Naive thymus-derived CD4-positive, alpha-beta T cell (primary cell): ENCODE measurements at regions of chr6 and their contacts with region 1.

Region 1: GRCh38 chr6:157879873-157880254 is 56.8 kb downstream of the SNX9 start:
- DNase-seq: no peak
- ATAC-seq: no peak
- H3K4me3 ChIP-seq: no peak overlapping the region
- H3K4me3 Mint-ChIP-seq: peak overlapping the region in 5 of 10 donors; percentile 4 to 68 (median 19)
- H3K27ac ChIP-seq: no peak overlapping the region
- H3K27ac Mint-ChIP-seq: peak overlapping the region in 8 of 9 donors; percentile 2 to 99 (median 70)
- H3K4me1 ChIP-seq: peaks cover 0 to 46% of the 10 kb centered on the region in 2 donors
- H3K4me1 Mint-ChIP-seq: peaks cover 16 to 88% (median 84%) of the 10 kb centered on the region in 7 donors
- H3K27me3 ChIP-seq: no peaks in the 10 kb centered on the region
- H3K27me3 Mint-ChIP-seq: no peaks in the 10 kb centered on the region

Region 2: GRCh38 chr6:157017861-157018260 is 862.0 kb before region 1 on chr6:
- CTCF ChIA-PET with region 1: no interaction called
- POLR2A ChIA-PET with region 1: no interaction called
- intact Hi-C with region 1: no loop called
- DNase-seq: no peak
- ATAC-seq: no peak
- H3K4me3 ChIP-seq: no peak overlapping the region
- H3K4me3 Mint-ChIP-seq: no peak overlapping the region
- H3K27ac ChIP-seq: peak overlapping the region; percentile 26
- H3K27ac Mint-ChIP-seq: peak overlapping the region in 6 of 9 donors; percentile 22 to 98 (median 86)
- H3K4me1 ChIP-seq: peaks cover 5 to 21% of the 10 kb centered on the region in 2 donors
- H3K4me1 Mint-ChIP-seq: peaks cover 26 to 82% (median 66%) of the 10 kb centered on the region in 7 donors
- H3K27me3 ChIP-seq: no peaks in the 10 kb centered on the region
- H3K27me3 Mint-ChIP-seq: no peaks in the 10 kb centered on the region

Region 3: DNA sequence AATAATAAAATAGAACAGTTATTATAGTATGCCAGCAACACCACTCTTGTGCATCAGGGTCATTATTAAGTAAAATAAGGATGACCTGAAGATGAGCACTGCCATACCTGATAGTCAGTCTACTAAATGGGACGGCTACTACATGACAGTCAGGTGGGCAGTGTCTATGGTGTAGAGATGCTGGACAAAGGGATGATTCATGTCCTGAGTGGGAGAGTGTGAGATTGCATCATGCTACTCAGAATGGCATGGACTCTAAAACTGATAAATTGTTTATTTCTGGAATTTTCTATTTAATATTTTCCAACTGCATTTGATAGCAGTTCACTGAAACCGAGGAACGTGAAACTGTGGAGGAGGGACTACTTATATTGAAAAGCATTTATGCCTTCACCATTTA is 18.1 kb before region 1 on chr6:
- CTCF ChIA-PET with region 1: no interaction called
- POLR2A ChIA-PET with region 1: interaction called, 4 read pairs
- intact Hi-C with region 1: loop called in 1 of 2 experiments (anchors 2 kb)
- DNase-seq: no peak
- ATAC-seq: no peak
- H3K4me3 ChIP-seq: no peak overlapping the region
- H3K4me3 Mint-ChIP-seq: no peak overlapping the region
- H3K27ac ChIP-seq: no peak overlapping the region
- H3K27ac Mint-ChIP-seq: peak overlapping the region in 6 of 9 donors; percentile 17 to 75 (median 59)
- H3K4me1 ChIP-seq: peaks cover 8 to 37% of the 10 kb centered on the region in 2 donors
- H3K4me1 Mint-ChIP-seq: peaks cover 24 to 95% (median 78%) of the 10 kb centered on the region in 7 donors
- H3K27me3 ChIP-seq: peaks cover 0 to 4% of the 10 kb centered on the region in 2 donors
- H3K27me3 Mint-ChIP-seq: peaks cover 0 to 45% (median 0%) of the 10 kb centered on the region in 5 donors